Activated B cell treated with CpG ODN at 0.5 μM for 24 hours (primary cell): ENCODE measurements at regions of chr1 and their contacts with region 1.

Region 1: GRCh38 chr1:112466078-112466660 is 42.6 kb upstream of the WNT2B start:
- DNase-seq: peak; percentile 81
- ATAC-seq: peak; percentile 93
- H3K4me3 Mint-ChIP-seq: peak overlapping the region; percentile 77
- H3K27ac Mint-ChIP-seq: peak overlapping the region; percentile 88
- H3K4me1 Mint-ChIP-seq: peaks cover 54% of the 10 kb centered on the region
- H3K27me3 Mint-ChIP-seq: peaks cover 16% of the 10 kb centered on the region
- CTCF ChIP-seq: no peak

Region 2: DNA sequence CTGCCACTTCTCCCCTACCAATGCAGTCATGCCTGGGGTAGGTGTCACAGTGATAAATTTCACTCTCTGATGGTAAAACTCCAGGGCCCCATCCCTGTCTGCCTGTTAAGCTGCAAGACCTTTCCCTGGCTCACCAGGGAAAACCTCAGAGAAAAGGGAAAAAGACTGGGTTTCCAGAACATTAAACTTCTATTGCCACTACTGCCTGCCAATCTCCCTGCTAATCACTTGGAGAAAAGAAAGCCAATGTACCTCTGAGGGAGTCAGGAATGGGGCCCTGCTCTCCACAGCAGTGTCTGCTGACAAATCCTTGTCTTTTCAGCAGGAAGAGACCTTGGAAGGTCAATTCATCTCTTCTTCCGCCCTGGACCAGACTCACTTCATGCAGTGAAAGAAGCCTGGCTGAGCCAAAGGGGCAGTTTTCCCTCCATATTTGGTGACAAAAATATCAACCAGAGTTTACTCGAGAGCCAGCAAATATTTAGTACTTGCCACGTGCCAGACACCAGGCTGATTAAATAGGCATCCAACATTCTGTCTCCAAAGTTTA is 119.3 kb before region 1 on chr1:
- CTCF ChIA-PET with region 1: no interaction called
- POLR2A ChIA-PET with region 1: no interaction called
- intact Hi-C with region 1: no loop called
- DNase-seq: no peak
- ATAC-seq: no peak
- H3K4me3 Mint-ChIP-seq: no peak overlapping the region
- H3K27ac Mint-ChIP-seq: no peak overlapping the region
- H3K4me1 Mint-ChIP-seq: peaks cover 6% of the 10 kb centered on the region
- H3K27me3 Mint-ChIP-seq: peaks cover 12% of the 10 kb centered on the region
- CTCF ChIP-seq: no peak

Region 3: DNA sequence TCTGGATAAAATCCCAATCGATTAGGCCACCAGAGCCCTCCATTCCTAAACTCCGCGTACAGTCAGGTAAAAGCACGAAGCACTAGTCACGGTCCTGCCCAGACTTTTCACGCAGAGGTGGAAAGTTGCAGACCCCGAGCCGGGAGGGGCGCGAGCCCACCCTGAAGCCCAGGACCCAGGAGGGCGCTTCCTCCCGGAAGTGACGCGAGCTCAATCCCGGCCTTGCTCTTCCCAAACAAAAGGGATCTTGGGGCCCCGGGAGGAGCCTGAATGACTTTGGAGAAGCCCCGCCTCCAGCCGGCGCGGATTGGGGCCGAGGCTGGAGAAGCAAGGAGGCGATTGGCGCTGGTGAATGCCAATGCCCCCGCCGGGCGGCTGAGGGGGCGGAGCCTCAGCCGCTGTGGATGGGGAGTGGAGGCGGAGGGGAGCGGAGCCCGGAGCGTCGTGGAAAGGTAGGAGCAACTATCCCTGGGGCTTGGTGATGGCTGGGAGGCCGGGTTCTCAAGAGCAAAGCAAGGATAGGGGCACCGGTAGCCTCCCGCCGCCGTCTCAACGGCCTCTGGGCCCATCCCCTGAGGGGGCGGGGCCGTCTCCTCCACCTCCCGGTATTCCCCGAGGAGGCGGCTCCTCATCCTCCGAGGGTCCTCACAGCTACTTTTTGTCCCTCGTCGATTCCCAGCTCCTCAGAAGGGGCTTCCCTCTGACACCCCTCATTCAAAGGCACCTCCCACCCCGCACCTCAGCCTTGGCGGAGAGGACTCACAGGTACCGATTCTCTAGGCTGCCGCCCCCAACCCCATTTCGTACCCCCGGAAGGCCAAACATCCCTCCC is 70.1 kb before region 1 on chr1 and contains the start of gene CTTNBP2NL:
- CTCF ChIA-PET with region 1: interaction called, 49 read pairs
- POLR2A ChIA-PET with region 1: interaction called, 15 read pairs
- intact Hi-C with region 1: loop called (anchors 1 kb)
- DNase-seq: peak; percentile 72
- ATAC-seq: peak; percentile 94
- H3K4me3 Mint-ChIP-seq: peak within 1 kb of the TSS; percentile 95
- H3K27ac Mint-ChIP-seq: peak within 1 kb of the TSS; percentile 71
- H3K4me1 Mint-ChIP-seq: peaks cover 54% of the 10 kb centered on the region
- H3K27me3 Mint-ChIP-seq: peaks cover under 1% of the 10 kb centered on the region
- CTCF ChIP-seq: no peak
- total RNA-seq, gene CTTNBP2NL: 11.7 and 14.1 TPM in 2 replicates

Region 4: GRCh38 chr1:112508278-112509004 is 42.3 kb after region 1 on chr1 and contains the start of gene WNT2B:
- CTCF ChIA-PET with region 1: no interaction called
- POLR2A ChIA-PET with region 1: interaction called, 6 read pairs
- intact Hi-C with region 1: loop called (anchors 1 kb)
- DNase-seq: peak; percentile 43
- ATAC-seq: peak; percentile 60
- H3K4me3 Mint-ChIP-seq: peak within 1 kb of the TSS; percentile 79
- H3K27ac Mint-ChIP-seq: no peak within 1 kb of the TSS
- H3K4me1 Mint-ChIP-seq: peaks cover 38% of the 10 kb centered on the region
- H3K27me3 Mint-ChIP-seq: peaks cover 9% of the 10 kb centered on the region
- CTCF ChIP-seq: no peak
- total RNA-seq, gene WNT2B: 1.0 and 1.4 TPM in 2 replicates

Region 5: DNA sequence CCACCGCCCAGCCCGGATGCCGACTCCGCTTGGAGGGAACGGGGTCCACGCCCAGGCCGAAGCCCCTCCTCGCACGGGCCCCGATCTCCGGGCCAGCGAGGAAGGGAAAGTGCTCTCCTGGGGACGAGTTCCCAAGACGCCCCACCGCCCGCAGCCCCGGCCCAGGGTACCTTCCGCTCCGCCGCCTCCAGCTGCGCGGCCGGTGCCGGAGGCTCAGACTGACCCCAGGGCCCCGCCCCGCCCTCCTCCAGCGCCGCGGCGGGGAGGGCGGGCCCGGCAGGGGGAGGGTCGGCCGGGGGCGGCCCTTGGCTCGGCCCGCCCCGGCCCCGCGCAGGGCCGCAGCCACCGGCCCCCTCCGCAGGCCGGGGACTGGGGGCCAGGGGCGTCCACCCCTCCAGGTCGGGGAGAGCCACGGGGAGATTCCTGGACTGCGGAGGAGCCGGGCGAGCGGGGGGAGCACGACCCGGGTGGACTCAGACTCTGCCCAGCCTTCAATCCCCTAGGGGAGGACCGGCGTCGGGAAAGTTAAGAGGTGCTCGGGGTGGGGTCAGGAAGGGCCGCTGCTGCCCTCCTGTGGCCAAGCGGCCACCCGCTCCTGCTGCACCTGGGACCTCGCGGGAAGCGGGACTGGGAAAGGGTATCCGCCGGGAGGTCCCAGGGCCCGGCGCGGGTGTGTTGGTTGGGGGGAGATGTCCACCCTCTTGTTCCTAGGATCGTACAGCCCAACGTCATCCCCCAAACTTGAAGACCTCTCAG is 240.9 kb after region 1 on chr1 and contains the start of gene RHOC:
- CTCF ChIA-PET with region 1: no interaction called
- POLR2A ChIA-PET with region 1: interaction called, 3 read pairs
- intact Hi-C with region 1: loop called (anchors 1 kb)
- DNase-seq: peak; percentile 74
- ATAC-seq: peak; percentile 86
- H3K4me3 Mint-ChIP-seq: peak within 1 kb of the TSS; percentile 82
- H3K27ac Mint-ChIP-seq: no peak within 1 kb of the TSS
- H3K4me1 Mint-ChIP-seq: peaks cover 47% of the 10 kb centered on the region
- H3K27me3 Mint-ChIP-seq: no peaks in the 10 kb centered on the region
- CTCF ChIP-seq: no peak
- total RNA-seq, gene RHOC: 11.5 and 13.5 TPM in 2 replicates

Region 6: GRCh38 chr1:113389953-113390834 is 924.0 kb after region 1 on chr1 and contains the start of gene MAGI3:
- CTCF ChIA-PET with region 1: no interaction called
- POLR2A ChIA-PET with region 1: no interaction called
- intact Hi-C with region 1: loop called (anchors 5 kb)
- DNase-seq: peak; percentile 83
- ATAC-seq: peak; percentile 98
- H3K4me3 Mint-ChIP-seq: peak within 1 kb of the TSS; percentile 95
- H3K27ac Mint-ChIP-seq: peak within 1 kb of the TSS; percentile 77
- H3K4me1 Mint-ChIP-seq: peaks cover 18% of the 10 kb centered on the region
- H3K27me3 Mint-ChIP-seq: peaks cover 29% of the 10 kb centered on the region
- CTCF ChIP-seq: no peak
- total RNA-seq, gene MAGI3: 0.83 and 1.0 TPM in 2 replicates